CD4-positive, alpha-beta memory T cell (primary cell): ENCODE measurements at regions of chr19 and their contacts with region 1.

Region 1: GRCh38 chr19:55258828-55259539 is at the start of gene PPP6R1:
- DNase-seq: peak; percentile 94 to 98 (median 96)
- H3K4me3 ChIP-seq: peak within 1 kb of the TSS; percentile 79 to 92
- H3K4me3 Mint-ChIP-seq: peak within 1 kb of the TSS; percentile 93 to 100 (median 98)
- H3K27ac ChIP-seq: peak within 1 kb of the TSS; percentile 92
- H3K27ac Mint-ChIP-seq: peak within 1 kb of the TSS; percentile 97 to 100 (median 99)
- H3K4me1 ChIP-seq: peaks cover 44% of the 10 kb centered on the region
- H3K4me1 Mint-ChIP-seq: peaks cover 23 to 50% (median 38%) of the 10 kb centered on the region in 4 donors
- H3K27me3 ChIP-seq: no peaks in the 10 kb centered on the region
- H3K27me3 Mint-ChIP-seq: peaks cover 0 to 2% of the 10 kb centered on the region in 2 donors
- total RNA-seq, gene PPP6R1: 161 to 162 TPM

Region 2: GRCh38 chr19:55209693-55210472 is 49.1 kb before region 1 on chr19:
- CTCF ChIA-PET with region 1: no interaction called
- POLR2A ChIA-PET with region 1: no interaction called
- intact Hi-C with region 1: no loop called
- DNase-seq: no peak
- H3K4me3 ChIP-seq: no peak overlapping the region
- H3K4me3 Mint-ChIP-seq: no peak overlapping the region
- H3K27ac ChIP-seq: no peak overlapping the region
- H3K27ac Mint-ChIP-seq: peak overlapping the region in 1 of 7 donors; percentile 37
- H3K4me1 ChIP-seq: no peaks in the 10 kb centered on the region
- H3K4me1 Mint-ChIP-seq: peaks cover 0 to 2% (median 0%) of the 10 kb centered on the region in 4 donors
- H3K27me3 ChIP-seq: peaks cover 5% of the 10 kb centered on the region
- H3K27me3 Mint-ChIP-seq: peaks cover 17 to 28% of the 10 kb centered on the region in 2 donors

Region 3: GRCh38 chr19:55223291-55224037 is 35.5 kb before region 1 on chr19:
- CTCF ChIA-PET with region 1: interaction called, 3 read pairs
- POLR2A ChIA-PET with region 1: interaction called, 6 read pairs
- intact Hi-C with region 1: loop called (anchors 5 kb)
- DNase-seq: no peak
- H3K4me3 ChIP-seq: no peak overlapping the region
- H3K4me3 Mint-ChIP-seq: peak overlapping the region in 1 of 8 donors; percentile 45
- H3K27ac ChIP-seq: no peak overlapping the region
- H3K27ac Mint-ChIP-seq: no peak overlapping the region
- H3K4me1 ChIP-seq: no peaks in the 10 kb centered on the region
- H3K4me1 Mint-ChIP-seq: peaks cover 0 to 7% (median 1%) of the 10 kb centered on the region in 4 donors
- H3K27me3 ChIP-seq: no peaks in the 10 kb centered on the region
- H3K27me3 Mint-ChIP-seq: no peaks in the 10 kb centered on the region

Region 4: GRCh38 chr19:55279770-55280643 is 21.0 kb after region 1 on chr19 and contains the start of gene HSPBP1:
- CTCF ChIA-PET with region 1: interaction called, 5 read pairs
- POLR2A ChIA-PET with region 1: interaction called, 199 read pairs
- intact Hi-C with region 1: loop called (anchors 1 kb)
- DNase-seq: peak; percentile 96 to 97 (median 97)
- H3K4me3 ChIP-seq: peak within 1 kb of the TSS; percentile 95 to 98
- H3K4me3 Mint-ChIP-seq: peak within 1 kb of the TSS; percentile 92 to 100 (median 98)
- H3K27ac ChIP-seq: peak within 1 kb of the TSS; percentile 69
- H3K27ac Mint-ChIP-seq: peak within 1 kb of the TSS; percentile 87 to 100 (median 100)
- H3K4me1 ChIP-seq: peaks cover 39% of the 10 kb centered on the region
- H3K4me1 Mint-ChIP-seq: peaks cover 24 to 55% (median 34%) of the 10 kb centered on the region in 4 donors
- H3K27me3 ChIP-seq: no peaks in the 10 kb centered on the region
- H3K27me3 Mint-ChIP-seq: no peaks in the 10 kb centered on the region
- total RNA-seq, gene HSPBP1: 17.9 to 18.5 TPM

Region 5: DNA sequence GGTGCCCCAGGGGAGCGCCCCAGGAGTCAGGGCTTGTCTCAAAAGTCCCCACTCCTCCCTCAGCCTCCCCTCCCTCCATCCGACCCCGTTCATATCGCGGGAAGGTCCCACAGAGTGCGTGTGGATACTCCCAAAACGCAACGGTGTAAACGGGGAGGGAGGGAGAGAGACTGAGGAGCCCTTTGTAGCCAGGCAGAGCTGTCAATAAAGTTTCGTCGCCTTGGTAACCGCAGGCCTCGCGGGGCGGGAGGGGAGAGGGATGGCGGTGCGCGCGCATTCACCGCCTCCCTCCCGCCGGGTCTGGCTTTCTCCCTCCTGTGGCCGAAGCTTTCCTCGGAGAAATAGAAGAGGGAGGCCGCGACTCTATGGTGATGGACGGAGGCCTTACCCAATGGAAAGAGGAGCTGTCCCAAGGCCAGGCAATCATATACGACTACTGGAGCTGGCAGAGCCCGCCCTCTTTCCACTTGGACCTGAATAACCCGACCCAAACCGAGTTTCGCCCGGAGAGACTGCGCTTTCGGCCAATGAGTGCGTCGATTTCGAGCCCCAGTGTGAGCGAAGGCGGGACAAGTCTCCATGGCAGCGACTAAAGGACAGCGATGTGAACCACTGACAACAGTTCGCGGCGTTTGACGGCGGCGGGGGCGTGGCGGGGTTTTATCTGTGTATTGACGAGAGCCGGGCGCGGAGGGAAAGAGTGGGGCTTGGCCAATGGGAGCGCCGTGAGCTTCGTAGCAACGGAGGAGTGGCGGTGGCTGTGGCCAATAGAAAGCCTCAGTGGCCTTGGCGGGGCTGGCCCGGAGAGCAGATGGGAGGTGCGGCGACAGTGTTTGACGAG is 80.3 kb after region 1 on chr19 and contains the start of gene KMT5C:
- CTCF ChIA-PET with region 1: interaction called, 3 read pairs
- POLR2A ChIA-PET with region 1: interaction called, 41 read pairs
- intact Hi-C with region 1: loop called (anchors 1 kb)
- DNase-seq: peak; percentile 100
- H3K4me3 ChIP-seq: peak within 1 kb of the TSS; percentile 66 to 74
- H3K4me3 Mint-ChIP-seq: peak within 1 kb of the TSS; percentile 90 to 96 (median 93)
- H3K27ac ChIP-seq: peak within 1 kb of the TSS; percentile 90
- H3K27ac Mint-ChIP-seq: peak within 1 kb of the TSS; percentile 97 to 100 (median 99)
- H3K4me1 ChIP-seq: peaks cover 24% of the 10 kb centered on the region
- H3K4me1 Mint-ChIP-seq: peaks cover 9 to 35% (median 18%) of the 10 kb centered on the region in 4 donors
- H3K27me3 ChIP-seq: no peaks in the 10 kb centered on the region
- H3K27me3 Mint-ChIP-seq: peaks cover 1 to 12% of the 10 kb centered on the region in 2 donors
- total RNA-seq, gene KMT5C: 23.1 to 23.5 TPM

Region 6: GRCh38 chr19:55476100-55476775 is 217.3 kb after region 1 on chr19 and contains the start of gene ZNF628:
- CTCF ChIA-PET with region 1: interaction called, 3 read pairs
- POLR2A ChIA-PET with region 1: interaction called, 15 read pairs
- intact Hi-C with region 1: no loop called
- DNase-seq: peak; percentile 97 to 98 (median 97)
- H3K4me3 ChIP-seq: peak within 1 kb of the TSS; percentile 65 to 84
- H3K4me3 Mint-ChIP-seq: peak within 1 kb of the TSS; percentile 88 to 93 (median 90)
- H3K27ac ChIP-seq: peak within 1 kb of the TSS; percentile 71
- H3K27ac Mint-ChIP-seq: peak within 1 kb of the TSS; percentile 90 to 97 (median 94)
- H3K4me1 ChIP-seq: peaks cover 22% of the 10 kb centered on the region
- H3K4me1 Mint-ChIP-seq: peaks cover 19 to 42% (median 29%) of the 10 kb centered on the region in 4 donors
- H3K27me3 ChIP-seq: no peaks in the 10 kb centered on the region
- H3K27me3 Mint-ChIP-seq: no peaks in the 10 kb centered on the region
- total RNA-seq, gene ZNF628: 8.1 to 9.1 TPM